ENCODE measurements at regions of chr4 and their contacts with region 1.

Region 1: DNA sequence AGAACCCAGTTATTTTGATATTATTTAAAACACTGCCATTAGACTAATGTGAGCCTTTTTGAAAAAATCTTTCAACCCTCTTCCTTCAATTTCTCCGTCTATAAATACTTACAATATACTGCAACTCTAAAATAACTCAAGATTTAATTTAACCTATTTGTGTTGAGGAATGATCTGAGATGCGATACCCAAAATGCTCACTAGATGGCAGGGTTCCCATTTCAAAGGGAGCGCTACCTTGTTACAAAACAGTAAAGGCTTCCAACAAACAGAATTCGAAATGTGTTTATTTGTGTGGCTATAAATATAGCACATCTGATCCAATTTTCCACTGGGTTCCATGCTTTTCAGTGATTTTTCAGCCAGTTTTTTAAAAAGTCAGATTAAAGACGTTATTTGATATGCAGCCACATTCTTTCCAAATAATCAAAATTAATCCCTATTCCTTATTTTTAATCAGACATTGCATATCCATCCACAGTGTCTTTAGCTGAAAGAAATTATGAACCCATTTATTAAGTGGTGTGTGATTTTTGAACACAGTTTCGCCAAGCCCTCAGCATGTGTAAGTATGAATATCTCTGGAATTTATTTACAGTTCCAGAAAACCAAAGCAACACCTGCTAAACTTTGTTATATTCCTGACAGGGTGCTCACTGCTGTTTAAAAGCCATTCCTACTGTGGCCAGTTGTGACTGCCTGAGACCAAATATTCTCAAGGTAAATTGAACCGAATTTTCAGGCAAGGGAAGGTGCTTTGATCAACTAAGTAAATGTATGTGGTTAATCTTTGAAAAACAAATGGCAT is 668.0 kb upstream of the LCORL start:
- DNase-seq: peak in 5 of 10 donors; percentile 37 to 65 (median 59)

Region 2: DNA sequence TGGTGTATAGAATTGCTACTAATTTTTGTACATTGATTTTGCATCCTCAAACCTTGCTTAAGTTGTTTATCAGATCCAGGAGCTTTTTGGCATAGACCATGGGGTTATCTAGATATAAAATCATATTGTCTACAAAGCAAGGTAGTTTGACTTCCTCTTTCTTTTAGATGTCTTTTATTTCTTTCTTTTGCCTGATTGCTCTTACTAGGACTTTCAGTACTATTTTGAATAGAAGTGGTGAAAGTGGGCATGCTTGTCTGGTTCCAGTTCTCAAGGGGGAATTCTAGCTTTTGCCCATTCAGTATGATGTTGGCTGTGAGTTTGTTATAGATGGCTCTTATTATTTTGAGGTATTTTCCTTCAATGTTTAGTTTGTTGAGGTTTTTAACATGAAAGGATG is 480.1 kb before region 1 on chr4:
- intact Hi-C with region 1: no loop called
- DNase-seq: no peak

Region 3: GRCh38 chr4:18664171-18664570 is 25.3 kb before region 1 on chr4:
- intact Hi-C with region 1: no loop called
- DNase-seq: peak in 6 of 10 donors; percentile 7 to 87 (median 22)

Region 4: DNA sequence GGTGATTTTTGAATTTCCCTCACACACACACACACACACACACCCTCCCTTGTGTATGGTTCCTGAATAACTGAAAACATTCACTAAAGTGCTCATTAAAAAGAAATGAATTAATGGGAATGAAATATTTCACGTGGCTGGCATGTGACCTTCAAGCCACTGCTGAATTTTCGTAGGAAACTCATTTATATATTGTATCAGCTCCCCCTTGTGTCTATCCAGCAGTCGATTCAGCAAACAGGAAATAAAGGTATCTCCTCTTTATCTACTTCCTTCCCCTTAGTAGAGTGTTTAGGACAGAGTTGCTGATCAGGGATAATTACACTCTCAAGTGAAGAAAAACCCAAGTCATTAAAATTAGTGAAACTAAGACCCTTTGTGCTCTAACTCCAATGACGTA is 244.7 kb after region 1 on chr4:
- intact Hi-C with region 1: loop called (anchors 5 kb)
- DNase-seq: no peak

Region 5: DNA sequence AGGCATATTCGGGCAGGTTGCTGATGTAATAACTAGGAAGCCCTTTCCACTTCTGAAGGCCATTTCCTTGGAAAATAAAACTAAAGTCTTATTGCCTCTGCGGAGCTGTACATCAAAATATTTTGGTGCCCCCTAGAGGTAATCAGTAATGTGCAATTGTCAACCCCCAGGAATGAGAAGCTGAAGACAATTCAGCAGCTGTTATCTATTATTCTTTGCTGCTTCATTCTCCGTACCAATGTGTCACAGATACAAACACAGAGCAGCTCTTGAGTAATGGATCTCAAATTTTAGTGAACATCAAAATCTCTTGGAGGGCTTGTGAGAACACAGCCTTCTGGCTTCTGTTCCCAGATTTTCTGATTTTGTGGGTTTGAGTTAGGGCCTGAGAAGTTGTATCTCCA is 1558.6 kb after region 1 on chr4:
- intact Hi-C with region 1: loop called (anchors 2 kb)
- DNase-seq: no peak

Measured in posterior cingulate gyrus (tissue), 11 donors.